Dorsolateral prefrontal cortex (tissue), 120 donors: ENCODE measurements at regions of chr1 and their contacts with region 1.

Region 1: DNA sequence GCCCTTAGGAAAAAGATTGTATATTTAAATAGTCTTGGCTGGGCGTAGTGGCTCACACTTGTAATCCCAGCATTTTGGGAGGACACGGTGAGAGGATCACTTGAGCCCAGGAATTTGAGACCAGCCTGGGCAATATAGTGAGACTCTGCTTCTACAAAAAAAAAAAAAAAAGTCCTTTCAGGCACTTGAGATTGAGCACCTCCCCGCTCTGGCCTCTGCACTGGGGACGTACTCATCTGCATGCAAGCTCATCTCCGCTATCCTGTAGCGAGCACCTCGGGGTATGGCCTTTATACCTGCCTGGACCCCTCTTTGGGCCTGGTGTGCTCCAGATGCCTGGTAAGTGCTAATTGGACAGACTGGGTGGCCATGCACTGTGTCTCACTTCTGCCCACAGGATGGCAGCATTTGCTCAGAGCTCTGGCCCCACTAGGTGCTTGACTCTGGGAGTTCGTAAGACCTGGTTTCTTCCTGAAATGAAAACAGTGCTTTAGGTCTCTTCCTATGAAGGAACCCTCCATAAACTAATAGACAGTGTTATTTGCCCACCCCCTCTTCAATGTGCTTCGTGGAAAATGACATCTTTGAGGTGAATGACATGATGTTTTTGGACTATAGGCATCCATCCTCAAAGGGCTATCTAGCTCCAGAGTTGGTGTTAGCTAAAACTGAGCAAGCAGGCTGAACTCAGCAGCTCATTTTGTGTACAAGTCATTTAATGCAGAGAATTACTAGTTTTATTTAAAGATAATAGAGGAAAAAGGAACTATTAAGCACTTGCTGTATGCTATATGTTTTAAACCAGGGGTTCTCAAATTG is 61.7 kb upstream of the ADAR start:
- DNase-seq: peak; percentile 54 to 85 (median 80)
- H3K4me3 ChIP-seq: no peak overlapping the region
- H3K27ac ChIP-seq: no peak overlapping the region
- H3K27me3 ChIP-seq: no peaks in the 10 kb centered on the region
- CTCF ChIP-seq: peak; percentile 37 to 91 (median 78)

Region 2: DNA sequence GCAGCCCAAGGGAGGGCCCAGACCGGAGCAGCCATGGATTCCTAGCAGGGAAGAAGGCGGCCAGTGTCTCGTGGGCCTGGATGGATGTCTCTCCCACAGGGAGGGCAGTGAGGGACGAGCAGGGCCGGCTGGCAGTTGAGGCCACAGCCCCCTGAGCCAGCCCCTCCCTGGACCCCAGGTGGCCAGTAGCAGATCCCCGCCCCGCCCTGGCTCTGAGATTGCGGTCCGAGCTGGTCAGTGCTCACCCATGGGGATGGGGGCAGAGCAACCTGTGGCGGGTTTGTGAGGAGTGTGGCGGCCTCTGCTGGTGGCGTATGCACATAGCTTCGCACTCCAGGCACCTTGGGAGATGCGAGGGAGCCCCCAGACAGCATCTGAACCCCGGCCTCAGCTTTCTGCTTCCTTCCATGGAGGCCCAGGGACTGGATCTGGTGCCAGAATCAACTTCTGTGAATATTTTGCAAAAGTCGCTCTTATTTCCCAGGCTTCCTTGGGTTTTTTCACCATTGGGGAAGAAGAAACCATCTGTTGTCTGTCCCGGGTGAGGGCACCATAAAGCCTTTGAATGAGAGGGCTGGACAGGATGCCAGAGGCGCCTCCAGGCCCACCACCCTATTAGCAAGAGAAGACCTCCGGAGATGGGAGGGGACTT is 208.8 kb after region 1 on chr1:
- intact Hi-C with region 1: loop called (anchors 1 kb)
- DNase-seq: peak; percentile 78 to 90 (median 82)
- H3K4me3 ChIP-seq: peak overlapping the region in 26 of 59 donors; percentile 6 to 47 (median 32)
- H3K27ac ChIP-seq: no peak overlapping the region
- H3K27me3 ChIP-seq: no peaks in the 10 kb centered on the region
- CTCF ChIP-seq: peak; percentile 54 to 97 (median 92)

Region 3: GRCh38 chr1:154943649-154944400 is 274.2 kb after region 1 on chr1:
- intact Hi-C with region 1: loop called (anchors 2 to 5 kb)
- DNase-seq: no peak
- H3K4me3 ChIP-seq: no peak overlapping the region
- H3K27ac ChIP-seq: peak overlapping the region in 36 of 59 donors; percentile 6 to 99 (median 41)
- H3K27me3 ChIP-seq: no peaks in the 10 kb centered on the region
- CTCF ChIP-seq: peak; percentile 22 to 76 (median 63)